CD4-positive, alpha-beta T cell (primary cell): ENCODE measurements at regions of chr19 and their contacts with region 1.

Region 1: DNA sequence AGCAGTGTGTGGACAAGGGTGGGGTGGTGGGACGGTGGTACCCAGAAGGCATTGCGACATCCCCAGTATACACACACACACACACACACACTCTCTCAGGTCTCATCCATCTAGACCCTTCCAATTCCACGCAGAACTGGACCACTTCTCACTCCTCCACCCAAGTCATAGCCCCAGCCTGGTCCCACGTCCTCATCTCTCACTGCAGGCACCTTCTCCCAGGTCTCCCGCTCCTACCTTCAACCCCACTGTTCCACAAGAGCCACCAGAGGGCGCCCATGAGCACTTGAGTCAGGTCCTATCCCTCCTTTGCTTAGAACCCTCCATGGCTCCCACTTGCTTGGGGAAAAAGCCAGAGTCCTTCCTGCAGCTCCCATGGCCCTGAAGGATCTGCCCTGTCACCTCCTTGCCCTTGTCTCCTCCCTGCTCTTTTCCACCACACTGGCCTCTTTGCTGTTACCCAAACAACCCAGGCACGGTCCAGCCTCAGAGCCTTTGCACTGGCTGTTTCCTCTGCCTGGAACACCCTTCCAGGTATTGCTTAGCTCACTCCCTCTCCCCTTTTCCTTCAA is 62.6 kb downstream of the IER2 start:
- DNase-seq: peak; percentile 62 to 89 (median 72)
- ATAC-seq: peak; percentile 50
- H3K4me3 ChIP-seq: no peak overlapping the region
- H3K4me3 Mint-ChIP-seq: peak overlapping the region; percentile 57
- H3K27ac ChIP-seq: no peak overlapping the region
- H3K27ac Mint-ChIP-seq: no peak overlapping the region
- H3K4me1 ChIP-seq: peaks cover 29% of the 10 kb centered on the region
- H3K4me1 Mint-ChIP-seq: peaks cover 28% of the 10 kb centered on the region
- H3K27me3 ChIP-seq: no peaks in the 10 kb centered on the region
- H3K27me3 Mint-ChIP-seq: no peaks in the 10 kb centered on the region
- CTCF ChIP-seq: peak; percentile 61

Region 2: GRCh38 chr19:13132471-13133180 is 80.2 kb before region 1 on chr19:
- CTCF ChIA-PET with region 1: no interaction called
- POLR2A ChIA-PET with region 1: no interaction called
- intact Hi-C with region 1: no loop called
- DNase-seq: peak in 6 of 14 experiments; percentile 29 to 69 (median 48)
- ATAC-seq: peak; percentile 95
- H3K4me3 ChIP-seq: no peak overlapping the region
- H3K4me3 Mint-ChIP-seq: no peak overlapping the region
- H3K27ac ChIP-seq: peak overlapping the region in 1 of 2 donors; percentile 15
- H3K27ac Mint-ChIP-seq: peak overlapping the region; percentile 80
- H3K4me1 ChIP-seq: peaks cover 24% of the 10 kb centered on the region
- H3K4me1 Mint-ChIP-seq: peaks cover 33% of the 10 kb centered on the region
- H3K27me3 ChIP-seq: no peaks in the 10 kb centered on the region
- H3K27me3 Mint-ChIP-seq: no peaks in the 10 kb centered on the region
- CTCF ChIP-seq: no peak

Region 3: GRCh38 chr19:13162518-13163314 is 50.1 kb before region 1 on chr19:
- CTCF ChIA-PET with region 1: no interaction called
- POLR2A ChIA-PET with region 1: interaction called, 10 read pairs
- intact Hi-C with region 1: no loop called
- DNase-seq: peak; percentile 50 to 93 (median 80)
- ATAC-seq: peak; percentile 56
- H3K4me3 ChIP-seq: peak overlapping the region; percentile 60
- H3K4me3 Mint-ChIP-seq: peak overlapping the region; percentile 86
- H3K27ac ChIP-seq: peak overlapping the region; percentile 87 to 89
- H3K27ac Mint-ChIP-seq: peak overlapping the region; percentile 99
- H3K4me1 ChIP-seq: peaks cover 96% of the 10 kb centered on the region
- H3K4me1 Mint-ChIP-seq: peaks cover 71% of the 10 kb centered on the region
- H3K27me3 ChIP-seq: no peaks in the 10 kb centered on the region
- H3K27me3 Mint-ChIP-seq: no peaks in the 10 kb centered on the region
- CTCF ChIP-seq: no peak

Region 4: DNA sequence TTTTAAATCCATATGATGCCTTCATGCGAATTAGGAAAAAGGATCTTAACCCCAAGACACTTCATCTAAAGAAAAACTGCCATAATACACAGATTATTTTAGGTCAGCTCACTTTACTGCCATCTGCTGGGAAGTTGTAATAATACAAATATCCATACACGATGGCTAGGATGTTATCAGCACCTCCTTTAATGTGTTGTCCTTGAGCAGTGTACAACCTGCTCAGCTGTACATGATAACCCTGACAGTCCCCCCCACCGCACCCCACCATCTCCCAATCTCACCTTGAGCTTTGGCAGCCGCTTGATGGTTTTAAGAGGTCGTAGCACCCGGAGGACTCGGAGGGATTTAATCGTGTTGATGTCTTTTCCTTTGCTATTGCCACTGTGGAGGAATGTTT is 49.6 kb after region 1 on chr19:
- CTCF ChIA-PET with region 1: no interaction called
- POLR2A ChIA-PET with region 1: no interaction called
- intact Hi-C with region 1: loop called in 1 of 2 experiments (anchors 5 kb)
- DNase-seq: peak in 3 of 14 experiments; percentile 70 to 74 (median 71)
- ATAC-seq: peak; percentile 64
- H3K4me3 ChIP-seq: no peak overlapping the region
- H3K4me3 Mint-ChIP-seq: no peak overlapping the region
- H3K27ac ChIP-seq: no peak overlapping the region
- H3K27ac Mint-ChIP-seq: no peak overlapping the region
- H3K4me1 ChIP-seq: no peaks in the 10 kb centered on the region
- H3K4me1 Mint-ChIP-seq: no peaks in the 10 kb centered on the region
- H3K27me3 ChIP-seq: no peaks in the 10 kb centered on the region
- H3K27me3 Mint-ChIP-seq: peaks cover 17% of the 10 kb centered on the region
- CTCF ChIP-seq: peak; percentile 64